ENCODE measurements at regions of chr5 and their contacts with region 1.

Region 1: GRCh38 chr5:34486160-34486848 is 169.8 kb upstream of the RAI14 start:
- DNase-seq: peak; percentile 68
- H3K4me3 ChIP-seq: no peak overlapping the region
- H3K27ac ChIP-seq: no peak overlapping the region
- H3K4me1 ChIP-seq: peaks cover 23% of the 10 kb centered on the region
- H3K27me3 ChIP-seq: no peaks in the 10 kb centered on the region
- CTCF ChIP-seq: peak; percentile 85 to 88

Region 2: GRCh38 chr5:34522599-34523386 is 36.5 kb after region 1 on chr5:
- CTCF ChIA-PET with region 1: no interaction called
- dilution Hi-C with region 1: no loop called
- in situ Hi-C with region 1: no loop called
- intact Hi-C with region 1: loop called (anchors 1 kb)
- DNase-seq: peak; percentile 73
- H3K4me3 ChIP-seq: no peak overlapping the region
- H3K27ac ChIP-seq: no peak overlapping the region
- H3K4me1 ChIP-seq: peaks cover 19% of the 10 kb centered on the region
- H3K27me3 ChIP-seq: no peaks in the 10 kb centered on the region
- CTCF ChIP-seq: peak; percentile 71 to 74

Region 3: GRCh38 chr5:34538026-34538672 is 51.8 kb after region 1 on chr5:
- CTCF ChIA-PET with region 1: interaction called, 3 read pairs
- dilution Hi-C with region 1: no loop called
- in situ Hi-C with region 1: no loop called
- intact Hi-C with region 1: loop called (anchors 1 kb)
- DNase-seq: peak; percentile 45
- H3K4me3 ChIP-seq: no peak overlapping the region
- H3K27ac ChIP-seq: no peak overlapping the region
- H3K4me1 ChIP-seq: peaks cover 19% of the 10 kb centered on the region
- H3K27me3 ChIP-seq: no peaks in the 10 kb centered on the region
- CTCF ChIP-seq: peak; percentile 28 to 61

Region 4: DNA sequence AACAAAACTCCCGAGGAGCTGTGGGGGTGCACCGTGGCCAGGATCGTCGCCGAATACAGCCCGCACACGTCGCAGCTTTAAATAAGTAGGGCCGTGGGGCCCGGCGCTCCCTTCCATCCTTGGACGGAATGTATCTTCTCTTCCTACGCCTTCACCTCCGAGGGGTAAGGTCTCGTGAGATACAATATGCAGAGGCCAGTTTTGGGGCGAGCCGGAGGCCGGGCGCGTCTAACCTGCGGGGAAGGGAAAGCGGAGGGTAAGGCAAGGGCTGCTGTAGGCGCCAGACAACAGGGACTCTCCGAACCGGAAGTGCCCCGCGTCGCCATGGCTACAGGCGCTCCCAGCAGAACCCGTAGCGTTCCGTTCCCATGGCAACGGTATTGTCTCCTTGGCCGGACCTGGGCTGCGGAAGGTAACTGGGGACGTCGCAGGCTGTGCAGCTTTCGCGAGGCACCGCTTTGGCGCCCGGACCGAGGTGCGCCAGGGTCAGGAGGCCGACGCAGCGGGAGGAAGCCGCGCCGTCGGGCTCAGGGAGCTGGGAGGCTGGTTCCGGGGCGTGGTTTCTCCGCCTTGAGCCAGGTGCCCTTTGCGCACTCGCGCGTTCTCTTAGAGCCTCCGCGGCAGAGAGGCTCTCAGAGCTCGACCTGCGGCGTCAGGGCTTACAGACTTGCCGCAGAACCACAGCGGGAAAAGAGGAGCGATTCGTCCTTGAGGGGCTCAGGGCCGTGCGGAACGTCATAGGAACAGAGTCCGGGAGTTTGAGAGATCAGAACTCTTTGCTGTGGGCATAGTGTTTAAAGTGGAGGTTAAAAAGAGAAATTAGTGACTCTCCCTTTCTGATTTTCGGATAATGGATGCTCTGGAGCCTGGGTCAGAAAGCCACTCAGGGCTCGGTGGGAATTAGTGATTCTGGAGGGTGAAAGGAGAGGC is 352.7 kb after region 1 on chr5 and contains the start of gene TTC23L:
- CTCF ChIA-PET with region 1: no interaction called
- dilution Hi-C with region 1: no loop called
- in situ Hi-C with region 1: no loop called
- intact Hi-C with region 1: loop called (anchors 1 kb)
- DNase-seq: peak; percentile 91
- H3K4me3 ChIP-seq: peak within 1 kb of the TSS; percentile 42 to 62 (median 57)
- H3K27ac ChIP-seq: peak within 1 kb of the TSS; percentile 46
- H3K4me1 ChIP-seq: no peaks in the 10 kb centered on the region
- H3K27me3 ChIP-seq: no peaks in the 10 kb centered on the region
- CTCF ChIP-seq: no peak
- total RNA-seq, gene TTC23L: 0.17 TPM in 1 of 2 donors, not detected in the other

Region 5: DNA sequence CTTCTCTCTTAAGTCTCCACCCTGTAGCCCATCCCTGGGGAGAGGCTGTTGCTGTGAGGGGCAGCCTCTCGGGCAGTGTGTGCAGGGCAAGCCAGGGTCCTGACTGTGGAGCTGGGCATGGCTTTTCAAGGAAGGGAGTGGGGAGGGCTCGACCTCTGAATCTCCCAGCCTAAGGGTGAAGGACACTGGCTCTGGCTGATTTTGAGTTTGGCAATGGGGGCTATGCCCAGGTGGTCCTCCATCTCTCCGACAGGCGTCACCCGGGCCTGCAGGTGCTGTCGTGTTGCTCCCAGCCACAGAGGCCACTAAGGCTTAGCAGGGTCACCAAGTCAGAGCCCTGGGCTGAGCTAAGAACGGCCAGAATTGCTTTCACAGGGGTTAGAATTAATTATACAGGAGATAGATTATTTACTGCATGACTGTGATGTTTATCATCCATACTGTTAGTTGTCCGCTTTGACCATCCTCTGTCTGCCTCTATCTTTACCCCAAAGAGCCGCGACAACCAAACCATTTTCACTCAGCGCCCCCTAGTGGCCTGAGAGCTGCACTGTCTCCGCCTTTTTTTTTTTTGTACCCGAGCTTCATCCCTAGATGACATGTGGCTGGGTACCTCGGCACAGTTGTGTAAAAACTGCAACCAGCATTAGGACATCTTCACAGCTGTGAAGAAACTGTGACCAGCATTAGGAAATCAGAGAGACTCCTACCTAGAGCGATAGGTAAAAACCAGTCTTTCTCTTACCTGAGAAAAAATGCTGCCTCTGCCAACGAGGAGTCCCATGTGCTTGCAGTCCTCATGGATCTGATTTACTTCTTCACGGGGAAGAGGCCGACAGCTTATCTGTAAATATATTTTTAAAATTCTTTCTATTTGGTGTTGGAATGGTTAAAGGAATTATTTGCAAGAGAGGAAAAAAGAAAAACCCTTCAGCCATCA is 517.0 kb after region 1 on chr5:
- CTCF ChIA-PET with region 1: no interaction called
- dilution Hi-C with region 1: no loop called
- in situ Hi-C with region 1: loop called in 1 of 2 experiments (anchors 25 kb)
- intact Hi-C with region 1: loop called (anchors 1 kb)
- DNase-seq: peak; percentile 42
- H3K4me3 ChIP-seq: no peak overlapping the region
- H3K27ac ChIP-seq: no peak overlapping the region
- H3K4me1 ChIP-seq: no peaks in the 10 kb centered on the region
- H3K27me3 ChIP-seq: no peaks in the 10 kb centered on the region
- CTCF ChIP-seq: peak; percentile 92 to 94

Measured in mammary epithelial cell (primary cell).